OCI-LY7 (cell line): ENCODE measurements at regions of chr7 and their contacts with region 1.

Region 1: GRCh38 chr7:8702807-8703206 is 269.4 kb downstream of the NXPH1 start:
- DNase-seq: no peak
- H3K4me3 ChIP-seq: no peak overlapping the region
- H3K27ac ChIP-seq: no peak overlapping the region
- H3K4me1 ChIP-seq: no peaks in the 10 kb centered on the region
- CTCF ChIP-seq: peak; percentile 23; the same call in 1 of the 2 replicates

Region 2: GRCh38 chr7:8261711-8262695 is 440.8 kb before region 1 on chr7 and contains the start of gene ICA1:
- CTCF ChIA-PET with region 1: no interaction called
- POLR2A ChIA-PET with region 1: interaction called, 10 read pairs
- intact Hi-C with region 1: no loop called
- DNase-seq: no peak
- H3K4me3 ChIP-seq: no peak within 1 kb of the TSS
- H3K27ac ChIP-seq: no peak within 1 kb of the TSS
- H3K4me1 ChIP-seq: no peaks in the 10 kb centered on the region
- CTCF ChIP-seq: no peak
- total RNA-seq, gene ICA1: not detected in 2 replicates

Region 3: GRCh38 chr7:8564281-8564680 is 138.5 kb before region 1 on chr7:
- CTCF ChIA-PET with region 1: no interaction called
- POLR2A ChIA-PET with region 1: no interaction called
- intact Hi-C with region 1: no loop called
- DNase-seq: no peak
- H3K4me3 ChIP-seq: no peak overlapping the region
- H3K27ac ChIP-seq: no peak overlapping the region
- H3K4me1 ChIP-seq: no peaks in the 10 kb centered on the region
- CTCF ChIP-seq: no peak